ENCODE measurements at regions of chr7 and their contacts with region 1.

Region 1: DNA sequence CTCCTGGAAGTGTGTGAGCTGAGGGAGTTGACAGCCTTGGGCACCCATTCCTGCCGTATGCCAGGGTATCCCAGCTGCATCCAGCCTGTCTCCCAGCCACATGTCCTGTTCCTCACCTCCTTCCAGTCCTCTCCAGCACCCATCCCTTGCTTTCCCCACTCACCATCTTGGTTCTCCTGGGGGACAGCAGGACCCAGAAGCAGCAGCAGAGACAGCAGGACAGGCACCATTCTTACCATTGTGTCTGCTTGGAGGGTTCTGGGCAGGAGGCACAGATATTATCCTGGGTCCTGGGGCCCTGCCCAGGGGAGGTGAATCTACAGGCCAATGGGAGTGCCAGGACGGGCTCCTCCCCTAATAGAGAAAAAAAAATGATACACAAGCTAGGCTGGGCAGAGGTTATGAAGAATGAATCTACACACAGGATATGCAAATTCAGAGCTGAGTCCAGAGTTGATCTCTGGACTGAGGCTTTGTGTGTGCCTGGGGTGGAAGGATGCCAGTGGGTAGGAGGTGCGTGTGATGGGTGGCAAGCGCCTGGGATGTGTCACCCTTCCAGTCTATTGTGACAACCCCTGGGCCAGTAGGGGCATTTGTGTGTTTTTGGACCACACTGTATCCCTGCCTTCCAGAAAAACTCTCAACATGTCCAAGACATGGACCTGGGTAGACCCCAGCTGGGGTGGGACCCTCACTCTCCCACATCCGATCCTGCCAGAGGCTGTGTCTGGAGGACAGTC is at the start of gene AZGP1:
- DNase-seq: no peak
- ATAC-seq: no peak
- H3K4me3 ChIP-seq: no peak within 1 kb of the TSS
- H3K27ac ChIP-seq: no peak within 1 kb of the TSS
- H3K4me1 ChIP-seq: peaks cover 4 to 7% of the 10 kb centered on the region in 2 experiments; a peak in 2 of 5 replicates
- H3K27me3 ChIP-seq: peaks cover 13 to 24% of the 10 kb centered on the region in 2 experiments; a peak in 3 of 5 replicates
- CTCF ChIP-seq: no peak
- EP300 ChIP-seq: no peak
- POLR2A ChIP-seq: no peak
- RAD21 ChIP-seq: no peak
- polyA plus RNA-seq, gene AZGP1: not detected

Region 2: DNA sequence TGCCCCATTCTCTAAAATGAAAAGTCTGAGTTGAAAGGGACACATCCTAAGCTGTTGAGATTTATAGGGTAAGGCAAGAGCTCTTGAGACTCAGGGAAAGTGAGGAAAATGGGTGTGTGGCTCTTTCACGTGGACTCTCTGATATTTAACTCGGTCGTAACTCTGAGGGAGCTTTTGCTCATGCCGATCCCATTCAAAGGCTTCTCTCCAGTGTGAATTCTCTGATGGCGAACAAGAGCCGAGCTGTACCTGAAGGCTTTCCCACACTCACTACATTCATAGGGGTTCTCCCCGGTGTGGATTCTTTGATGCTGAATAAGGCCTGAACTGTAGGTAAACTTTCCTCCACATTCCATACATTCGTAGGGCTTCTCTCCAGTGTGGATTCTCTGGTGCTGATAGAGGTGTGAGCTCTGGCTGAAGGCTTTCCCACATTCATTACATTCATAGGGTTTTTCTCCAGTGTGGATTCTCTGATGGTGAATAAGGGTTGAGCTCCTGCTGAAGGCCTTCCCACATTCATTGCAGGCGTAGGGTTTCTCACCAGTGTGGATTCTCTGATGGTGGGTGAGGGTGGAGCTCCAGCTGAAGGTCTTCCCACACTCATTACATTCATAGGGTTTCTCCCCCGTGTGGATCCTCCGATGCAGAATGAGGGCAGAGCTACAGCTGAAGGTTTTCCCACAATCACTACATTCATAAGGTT is 95.2 kb after region 1 on chr7:
- CTCF ChIA-PET with region 1: no interaction called
- POLR2A ChIA-PET with region 1: no interaction called
- in situ Hi-C with region 1: no loop called
- intact Hi-C with region 1: no loop called
- DNase-seq: peak in 1 of 4 experiments; percentile 18
- ATAC-seq: peak; percentile 48
- H3K4me3 ChIP-seq: no peak overlapping the region
- H3K27ac ChIP-seq: no peak overlapping the region
- H3K4me1 ChIP-seq: no peaks in the 10 kb centered on the region; a peak in 1 of 5 replicates
- H3K27me3 ChIP-seq: no peaks in the 10 kb centered on the region
- CTCF ChIP-seq: no peak
- EP300 ChIP-seq: no peak
- POLR2A ChIP-seq: peak; percentile 67
- RAD21 ChIP-seq: no peak

Region 3: GRCh38 chr7:100126931-100127865 is 151.2 kb after region 1 on chr7 and contains the start of gene MBLAC1:
- CTCF ChIA-PET with region 1: interaction called, 4 read pairs
- POLR2A ChIA-PET with region 1: no interaction called
- in situ Hi-C with region 1: no loop called
- intact Hi-C with region 1: loop called (anchors 5 kb)
- DNase-seq: peak; percentile 90 to 96 (median 94)
- ATAC-seq: peak; percentile 70
- H3K4me3 ChIP-seq: peak within 1 kb of the TSS; percentile 74
- H3K27ac ChIP-seq: peak within 1 kb of the TSS; percentile 97
- H3K4me1 ChIP-seq: peaks cover 35 to 60% of the 10 kb centered on the region in 2 experiments
- H3K27me3 ChIP-seq: no peaks in the 10 kb centered on the region
- CTCF ChIP-seq: peak in 1 of 3 experiments; percentile 25; a peak in 1 of 6 replicates
- EP300 ChIP-seq: 0 out of 2 replicates have a peak, but pooled peaks have one; percentile 7
- POLR2A ChIP-seq: peak; percentile 92
- RAD21 ChIP-seq: no peak
- polyA plus RNA-seq, gene MBLAC1: 0.03 TPM